Gastrocnemius medialis (tissue), 4 donors: ENCODE measurements at regions of chr14 and their contacts with region 1.

Region 1: DNA sequence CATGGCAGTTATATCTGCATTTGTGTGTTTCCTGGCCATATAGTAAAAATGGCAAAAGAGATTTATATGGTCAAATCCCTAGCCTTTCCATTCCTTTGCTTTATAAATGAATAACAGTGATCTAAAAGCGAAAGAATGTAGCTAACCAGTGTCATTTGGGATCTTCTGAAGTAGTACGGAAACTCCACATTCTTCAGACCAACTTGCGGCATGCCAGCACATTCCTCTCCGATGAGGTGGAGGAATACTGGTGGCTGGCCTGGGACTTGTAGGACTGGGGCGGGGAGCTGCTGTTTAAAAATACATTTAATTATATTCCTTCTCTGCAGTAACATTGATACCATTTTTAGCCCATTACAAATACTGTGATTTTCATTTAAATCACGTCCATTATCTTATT is 85.3 kb downstream of the SAMD4A start:
- DNase-seq: peak; percentile 74 to 85
- ATAC-seq: peak; percentile 63 to 71
- H3K4me3 ChIP-seq: peak overlapping the region in 3 of 4 donors; percentile 18 to 36 (median 33)
- H3K27ac ChIP-seq: peak overlapping the region; percentile 83 to 85 (median 84)
- H3K4me1 ChIP-seq: peaks cover 68 to 78% of the 10 kb centered on the region in 2 donors
- H3K27me3 ChIP-seq: no peaks in the 10 kb centered on the region
- CTCF ChIP-seq: no peak
- POLR2A ChIP-seq: peak in 1 of 2 donors; percentile 9

Region 2: DNA sequence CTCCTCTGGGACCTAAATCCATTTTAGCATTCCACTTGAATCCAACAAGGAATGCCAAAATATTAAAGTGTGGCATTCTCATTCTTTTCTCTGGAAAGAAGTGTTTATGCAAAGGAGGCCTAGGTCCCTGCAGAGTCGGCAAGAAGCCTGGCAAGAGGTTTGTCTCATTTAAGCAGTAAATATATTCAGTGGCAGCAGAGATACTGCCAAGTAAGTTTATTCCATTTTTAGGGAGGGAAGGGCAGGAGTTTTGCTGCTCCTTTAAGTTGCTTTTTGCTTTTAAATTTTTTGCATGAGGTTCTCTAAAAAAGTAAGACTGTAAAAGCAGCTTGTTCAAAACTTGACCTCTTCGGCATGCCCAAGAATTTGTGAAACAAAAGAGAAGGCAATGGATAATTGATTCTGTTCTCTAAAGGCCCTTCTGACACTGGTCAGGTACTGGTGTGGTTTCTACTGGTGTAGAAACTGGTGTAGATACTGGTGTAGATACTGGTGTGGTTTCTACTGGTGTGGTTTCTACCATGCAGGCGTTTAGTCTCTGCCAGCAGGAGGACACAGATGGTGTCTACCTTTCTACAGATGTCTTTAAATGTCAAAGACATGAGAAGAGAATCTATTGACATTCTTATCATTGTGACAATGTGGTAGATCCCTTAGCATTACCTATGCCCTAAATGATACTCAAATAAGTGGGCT is 22.0 kb after region 1 on chr14:
- in situ Hi-C with region 1: no loop called
- intact Hi-C with region 1: loop called (anchors 2 kb)
- DNase-seq: no peak
- ATAC-seq: no peak
- H3K4me3 ChIP-seq: no peak overlapping the region
- H3K27ac ChIP-seq: peak overlapping the region; percentile 77 to 90 (median 83)
- H3K4me1 ChIP-seq: peaks cover 86 to 98% of the 10 kb centered on the region in 2 donors
- H3K27me3 ChIP-seq: no peaks in the 10 kb centered on the region
- CTCF ChIP-seq: no peak
- POLR2A ChIP-seq: no peak

Region 3: DNA sequence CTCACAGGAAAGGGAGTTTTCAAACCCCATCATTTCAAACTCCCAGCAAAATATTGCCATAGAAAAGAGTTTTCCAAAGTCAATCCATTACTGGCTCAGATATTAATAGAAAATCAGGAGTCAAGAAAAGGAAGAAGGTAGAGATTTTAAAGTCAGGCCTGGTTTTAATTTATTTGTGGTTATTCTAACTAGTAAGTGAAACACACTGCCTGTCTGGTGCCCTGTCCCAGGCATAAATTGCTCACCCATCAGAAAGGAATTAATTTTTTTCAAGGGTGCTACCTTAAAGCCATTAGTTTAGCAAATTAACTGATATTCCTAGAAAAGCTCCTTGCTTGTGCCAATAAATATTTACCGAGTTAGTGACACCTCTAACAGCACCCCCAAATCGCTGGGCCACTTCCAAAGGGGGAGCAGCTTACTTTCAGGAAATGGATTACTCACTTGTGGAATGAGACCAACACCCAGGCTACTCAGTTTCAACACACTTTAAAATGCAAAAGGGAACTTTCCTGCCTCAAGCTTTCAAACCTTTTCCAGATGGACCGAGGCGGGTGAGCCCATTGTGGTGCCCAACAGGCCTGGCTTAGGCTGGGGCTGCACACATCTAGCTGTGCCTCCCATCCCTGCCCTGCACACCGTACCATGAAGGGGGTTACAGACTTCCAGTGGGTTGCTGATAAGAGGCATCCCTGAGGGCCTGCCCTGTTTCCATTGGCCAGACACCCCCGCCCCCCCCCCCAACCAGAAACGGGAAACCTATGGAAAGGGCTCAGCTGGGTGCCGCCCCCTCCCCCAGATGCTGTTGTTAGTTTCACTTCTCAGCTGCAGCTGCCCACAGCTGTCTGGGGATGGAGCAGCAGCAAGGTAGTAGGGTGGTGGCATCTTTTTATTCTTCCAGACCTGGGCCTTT is 31.9 kb after region 1 on chr14:
- in situ Hi-C with region 1: no loop called
- intact Hi-C with region 1: loop called (anchors 1 kb)
- DNase-seq: peak in 1 of 2 donors; percentile 50
- ATAC-seq: no peak
- H3K4me3 ChIP-seq: no peak overlapping the region
- H3K27ac ChIP-seq: peak overlapping the region; percentile 86 to 99 (median 92)
- H3K4me1 ChIP-seq: peaks cover 56 to 64% of the 10 kb centered on the region in 2 donors
- H3K27me3 ChIP-seq: no peaks in the 10 kb centered on the region
- CTCF ChIP-seq: no peak
- POLR2A ChIP-seq: no peak